ENCODE measurements at regions of chr17 and their contacts with region 1.

Region 1: DNA sequence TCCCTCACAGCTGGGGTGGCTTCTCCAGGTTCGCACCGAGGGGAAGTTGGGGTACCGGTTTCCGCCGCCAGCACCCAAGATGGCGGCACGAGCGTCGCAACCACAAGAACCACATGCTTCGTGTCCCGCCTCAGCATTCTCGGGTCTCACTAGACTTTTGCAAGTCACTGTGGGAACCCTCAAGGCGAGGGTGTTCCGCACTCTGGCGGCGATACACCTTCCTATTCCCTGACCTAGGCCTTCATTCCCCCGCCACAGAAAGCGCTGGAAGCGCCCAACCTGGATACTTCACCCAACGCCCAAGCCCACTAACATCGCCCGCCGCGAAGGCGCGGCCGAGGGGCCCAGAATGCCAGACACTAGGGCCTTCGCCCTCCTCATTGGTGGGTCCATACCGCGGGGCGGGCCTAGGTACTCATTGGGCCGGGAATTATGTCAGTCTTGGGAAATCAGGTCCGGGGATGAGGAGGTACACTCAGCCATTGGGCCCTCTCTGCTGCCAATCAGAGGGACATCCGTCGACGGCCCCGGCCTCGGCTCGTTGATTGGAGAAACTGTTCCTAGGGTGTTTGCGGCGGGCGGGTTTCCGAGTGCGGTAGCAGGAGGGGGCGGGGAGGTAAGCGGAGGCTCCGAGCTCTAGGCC is at the start of gene NFE2L1:
- DNase-seq: peak; percentile 100
- ATAC-seq: peak; percentile 89
- H3K4me3 ChIP-seq: peak within 1 kb of the TSS; percentile 69
- H3K27ac ChIP-seq: peak within 1 kb of the TSS; percentile 92
- H3K4me1 ChIP-seq: peaks cover 60% of the 10 kb centered on the region
- H3K27me3 ChIP-seq: no peaks in the 10 kb centered on the region
- CTCF ChIP-seq: no peak
- total RNA-seq, gene NFE2L1: 45.1 and 72.6 TPM in 2 replicates

Region 2: GRCh38 chr17:47934856-47935255 is 113.0 kb before region 1 on chr17:
- CTCF ChIA-PET with region 1: no interaction called
- POLR2A ChIA-PET with region 1: no interaction called
- intact Hi-C with region 1: no loop called
- DNase-seq: peak; percentile 71
- ATAC-seq: peak; percentile 26; the same call in 1 of the 2 replicates
- H3K4me3 ChIP-seq: no peak overlapping the region
- H3K27ac ChIP-seq: no peak overlapping the region
- H3K4me1 ChIP-seq: peaks cover 26% of the 10 kb centered on the region
- H3K27me3 ChIP-seq: no peaks in the 10 kb centered on the region
- CTCF ChIP-seq: no peak

Region 3: GRCh38 chr17:48074315-48075081 is 26.6 kb after region 1 on chr17:
- CTCF ChIA-PET with region 1: interaction called, 4 read pairs
- POLR2A ChIA-PET with region 1: no interaction called
- intact Hi-C with region 1: loop called (anchors 1 kb)
- DNase-seq: peak; percentile 95
- ATAC-seq: peak; percentile 91
- H3K4me3 ChIP-seq: no peak overlapping the region
- H3K27ac ChIP-seq: no peak overlapping the region
- H3K4me1 ChIP-seq: no peaks in the 10 kb centered on the region
- H3K27me3 ChIP-seq: no peaks in the 10 kb centered on the region
- CTCF ChIP-seq: peak; percentile 92

Region 4: DNA sequence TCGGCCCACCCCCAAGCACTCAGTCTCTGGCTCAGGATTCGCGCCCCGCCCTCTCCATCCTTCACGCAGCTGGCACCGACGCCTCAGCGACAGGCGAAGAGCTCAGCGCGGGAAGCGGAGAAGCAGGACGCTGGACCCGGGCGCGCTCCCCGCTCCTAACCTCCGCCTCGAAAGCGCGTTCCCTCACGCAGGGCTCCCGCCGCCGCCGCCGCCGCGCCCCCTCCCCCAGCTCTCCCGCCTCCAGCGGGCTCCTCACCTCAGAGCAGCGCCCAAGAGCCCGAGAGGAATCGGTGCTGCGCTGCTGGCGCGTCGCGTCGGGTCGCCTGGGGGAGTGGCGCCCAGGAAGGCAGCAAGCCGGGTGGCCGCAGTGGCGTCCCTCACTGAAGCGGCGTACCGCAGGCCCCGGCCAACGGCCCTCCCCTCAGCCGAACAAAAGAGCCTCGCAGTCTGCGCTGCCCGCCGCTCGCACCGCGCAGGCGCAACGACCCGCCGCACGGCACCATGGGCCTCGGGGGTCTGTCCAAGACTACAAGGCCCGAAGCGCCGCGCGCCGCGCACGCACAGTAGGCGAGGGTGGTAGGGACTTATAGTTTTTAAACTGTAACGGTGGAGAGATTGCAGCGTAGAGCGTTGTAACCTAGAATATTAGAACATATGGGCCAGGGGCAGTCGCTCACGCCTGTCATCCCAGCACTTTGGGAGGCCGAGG is 53.3 kb after region 1 on chr17 and contains the start of gene CBX1:
- CTCF ChIA-PET with region 1: interaction called, 3 read pairs
- POLR2A ChIA-PET with region 1: interaction called, 3 read pairs
- intact Hi-C with region 1: loop called (anchors 2 kb)
- DNase-seq: peak; percentile 96
- ATAC-seq: peak; percentile 95
- H3K4me3 ChIP-seq: peak within 1 kb of the TSS; percentile 78
- H3K27ac ChIP-seq: peak within 1 kb of the TSS; percentile 67
- H3K4me1 ChIP-seq: peaks cover 10% of the 10 kb centered on the region
- H3K27me3 ChIP-seq: no peaks in the 10 kb centered on the region
- CTCF ChIP-seq: no peak
- total RNA-seq, gene CBX1: 119 and 142 TPM in 2 replicates

Region 5: DNA sequence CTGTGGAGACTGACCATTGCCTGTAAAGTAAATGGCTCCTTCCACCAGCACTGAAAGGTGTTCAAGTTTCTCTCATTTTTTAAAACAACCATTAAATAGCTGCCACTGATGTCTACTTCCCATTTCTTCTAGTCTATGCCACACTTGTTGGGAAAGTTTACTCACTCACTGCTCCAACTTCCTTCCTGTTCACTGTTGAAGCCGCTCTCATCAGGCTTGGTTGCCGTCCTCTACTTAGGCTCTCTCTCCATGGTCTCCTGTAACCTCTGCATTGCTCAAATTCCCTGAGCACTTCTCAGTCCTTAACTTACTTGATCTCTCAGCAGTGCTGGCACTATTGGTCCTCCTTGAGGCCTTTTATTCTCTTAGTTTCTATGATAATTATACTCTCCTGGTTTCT is 92.1 kb after region 1 on chr17:
- CTCF ChIA-PET with region 1: no interaction called
- POLR2A ChIA-PET with region 1: no interaction called
- intact Hi-C with region 1: no loop called
- DNase-seq: no peak
- ATAC-seq: no peak
- H3K4me3 ChIP-seq: no peak overlapping the region
- H3K27ac ChIP-seq: no peak overlapping the region
- H3K4me1 ChIP-seq: no peaks in the 10 kb centered on the region
- H3K27me3 ChIP-seq: peaks cover 22% of the 10 kb centered on the region
- CTCF ChIP-seq: no peak

Region 6: GRCh38 chr17:49325980-49326379 is 1278.1 kb after region 1 on chr17:
- CTCF ChIA-PET with region 1: no interaction called
- POLR2A ChIA-PET with region 1: interaction called, 23 read pairs
- intact Hi-C with region 1: no loop called
- DNase-seq: no peak
- ATAC-seq: no peak
- H3K4me3 ChIP-seq: no peak overlapping the region
- H3K27ac ChIP-seq: no peak overlapping the region
- H3K4me1 ChIP-seq: no peaks in the 10 kb centered on the region
- H3K27me3 ChIP-seq: no peaks in the 10 kb centered on the region
- CTCF ChIP-seq: no peak